ENCODE measurements at regions of chr12 and their contacts with region 1.

Region 1: DNA sequence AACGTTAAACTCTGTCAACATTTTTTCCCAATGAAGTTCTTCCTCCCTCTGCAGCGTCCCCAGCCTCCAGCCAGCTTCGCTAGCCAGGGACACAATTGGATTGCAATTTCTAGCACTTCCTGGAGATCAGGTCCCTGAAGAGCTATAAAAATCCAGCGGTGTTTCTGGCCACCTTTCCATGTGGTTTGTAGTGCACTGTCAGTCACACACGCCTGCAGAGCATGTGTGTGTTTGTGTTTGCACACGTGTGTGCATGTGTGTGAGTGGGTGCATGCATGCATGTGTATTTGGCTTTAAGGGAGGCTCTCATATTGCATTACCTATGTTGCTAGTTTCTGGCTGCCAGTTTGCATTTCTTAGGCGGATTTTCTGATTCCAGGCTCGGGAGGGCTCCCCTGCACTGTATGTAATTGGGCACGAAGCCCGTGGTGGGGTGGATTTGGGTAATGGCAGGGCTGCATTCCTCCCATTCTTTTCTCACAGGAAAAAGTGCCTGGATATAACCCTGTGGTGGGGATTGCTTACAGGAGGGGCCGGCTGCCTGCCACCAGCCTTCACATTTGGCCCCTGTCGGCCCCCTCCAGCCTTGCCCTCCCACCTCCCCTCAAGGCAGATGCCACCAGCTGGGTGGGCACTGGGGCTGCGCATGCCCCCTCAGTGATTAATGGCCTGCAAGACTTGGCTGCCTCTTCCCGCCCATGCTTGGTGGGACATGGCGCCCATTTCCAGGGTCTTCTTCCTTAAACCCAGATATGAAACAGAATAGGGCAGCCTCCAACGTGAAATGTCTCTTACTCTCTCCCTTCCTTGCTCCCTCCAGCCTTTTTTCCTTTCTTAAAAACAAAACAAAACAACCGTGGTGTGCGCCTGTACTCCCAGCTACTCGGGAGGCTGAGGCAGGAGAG is 74.0 kb downstream of the TSPAN9 start:
- DNase-seq: peak; percentile 37
- H3K4me3 ChIP-seq: no peak overlapping the region
- H3K27ac ChIP-seq: no peak overlapping the region
- H3K4me1 ChIP-seq: peaks cover 42% of the 10 kb centered on the region
- H3K27me3 ChIP-seq: no peaks in the 10 kb centered on the region
- CTCF ChIP-seq: no peak
- POLR2A ChIP-seq: no peak

Region 2: DNA sequence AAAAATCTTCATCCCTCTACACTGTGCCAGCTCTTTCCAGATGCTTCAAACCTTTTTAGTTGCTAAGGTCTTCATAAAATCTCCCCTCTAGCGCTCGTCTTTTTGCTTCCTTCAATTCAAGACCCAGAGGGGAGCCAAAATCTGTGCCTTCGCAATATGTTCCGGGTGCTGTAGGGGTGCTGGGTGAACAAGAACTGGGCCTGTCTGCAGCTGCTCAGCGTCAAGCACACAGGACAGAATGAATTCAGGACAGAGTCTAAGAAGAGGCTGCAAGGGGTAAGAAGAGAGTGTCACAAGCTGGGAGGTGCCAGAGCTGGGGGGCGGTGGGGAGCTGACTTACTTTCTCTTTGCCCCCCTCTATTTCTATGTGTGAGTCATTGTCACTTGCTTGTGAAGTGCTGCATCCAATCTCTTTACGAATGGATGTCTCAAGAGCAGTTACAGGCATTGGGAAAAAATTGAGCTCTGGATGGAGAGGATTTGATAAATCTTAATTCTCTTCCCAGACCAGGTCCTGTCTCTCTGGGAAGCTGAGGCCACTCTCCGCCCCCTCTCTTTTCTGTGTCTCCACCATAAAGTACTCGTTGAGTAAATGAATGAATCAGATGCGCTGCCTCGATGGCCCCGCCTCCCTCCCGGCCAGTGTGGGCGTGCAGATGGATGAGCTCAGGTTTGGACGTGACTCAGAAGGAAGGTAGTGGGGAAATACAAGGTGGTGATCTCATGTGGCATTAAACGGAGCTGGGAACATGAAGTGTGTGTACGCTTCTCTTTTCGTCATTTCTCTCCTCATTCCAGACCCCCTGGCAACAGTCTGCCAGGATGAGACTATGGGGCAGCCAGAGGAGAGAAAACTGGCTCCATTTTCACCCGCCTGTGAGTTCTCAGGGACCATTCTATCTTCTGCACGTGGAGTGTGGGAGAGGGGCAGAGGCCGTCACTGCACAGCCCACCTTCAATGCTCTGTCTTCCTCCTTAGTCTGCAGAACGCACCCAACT is 17.3 kb after region 1 on chr12:
- CTCF ChIA-PET with region 1: interaction called, 13 read pairs
- POLR2A ChIA-PET with region 1: no interaction called
- dilution Hi-C with region 1: no loop called
- intact Hi-C with region 1: loop called (anchors 1 kb)
- DNase-seq: no peak
- H3K4me3 ChIP-seq: no peak overlapping the region
- H3K27ac ChIP-seq: no peak overlapping the region
- H3K4me1 ChIP-seq: peaks cover 10% of the 10 kb centered on the region
- H3K27me3 ChIP-seq: no peaks in the 10 kb centered on the region
- CTCF ChIP-seq: no peak
- POLR2A ChIP-seq: no peak

Region 3: GRCh38 chr12:3202734-3203446 is 51.7 kb after region 1 on chr12:
- CTCF ChIA-PET with region 1: interaction called, 7 read pairs
- POLR2A ChIA-PET with region 1: no interaction called
- dilution Hi-C with region 1: no loop called
- intact Hi-C with region 1: loop called (anchors 5 kb)
- DNase-seq: peak; percentile 58
- H3K4me3 ChIP-seq: no peak overlapping the region
- H3K27ac ChIP-seq: no peak overlapping the region
- H3K4me1 ChIP-seq: peaks cover 22% of the 10 kb centered on the region
- H3K27me3 ChIP-seq: peaks cover 2 to 11% of the 10 kb centered on the region in 2 experiments
- CTCF ChIP-seq: peak; percentile 93 to 98
- POLR2A ChIP-seq: no peak

Region 4: DNA sequence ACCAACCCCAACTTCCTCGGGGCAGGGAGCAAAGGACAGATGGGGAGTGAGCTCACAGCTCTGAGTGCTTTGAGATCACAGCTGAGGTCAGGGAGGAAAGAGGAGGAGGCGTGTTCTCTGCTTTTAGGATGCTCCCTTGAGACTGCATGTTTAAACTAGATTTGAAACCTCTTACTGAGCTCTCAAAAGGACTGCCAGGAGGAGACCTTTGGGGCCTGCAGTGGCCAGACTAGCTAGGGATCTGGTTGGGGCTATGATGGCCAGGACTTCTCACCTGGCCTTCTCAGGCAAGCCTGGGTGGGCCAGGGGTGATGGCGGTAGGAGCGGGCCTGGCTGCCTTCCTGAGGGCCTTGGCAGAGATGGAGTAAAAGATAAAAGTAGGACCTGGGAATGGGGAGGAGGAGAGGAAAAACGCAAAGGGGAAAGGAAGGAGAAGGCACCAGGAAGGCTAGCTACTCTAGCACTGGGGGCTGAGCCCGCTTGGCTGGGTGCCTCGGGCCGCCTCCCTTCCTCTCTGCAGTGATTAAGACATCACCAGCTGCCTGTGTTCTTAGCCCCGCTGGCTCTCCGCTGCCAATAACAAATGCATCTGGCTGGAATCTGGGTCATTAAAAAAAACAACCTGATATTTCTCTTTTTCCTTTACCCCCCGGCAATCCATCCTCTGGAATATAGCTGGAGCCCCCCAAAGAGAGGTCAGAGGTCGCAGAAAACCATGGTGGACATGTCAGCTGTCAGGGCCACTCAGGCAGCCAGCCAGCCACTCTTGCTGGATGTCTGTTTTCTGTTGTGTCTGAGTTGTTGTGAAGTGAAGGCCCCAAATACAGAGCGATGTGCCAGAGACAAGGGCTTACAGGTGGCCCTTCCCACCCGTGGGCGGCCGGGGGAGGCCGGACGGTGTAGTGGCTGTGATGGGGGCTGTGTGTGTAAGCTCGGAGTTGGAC is 67.3 kb after region 1 on chr12:
- CTCF ChIA-PET with region 1: interaction called, 3 read pairs
- POLR2A ChIA-PET with region 1: no interaction called
- dilution Hi-C with region 1: no loop called
- intact Hi-C with region 1: loop called (anchors 5 kb)
- DNase-seq: peak; percentile 88
- H3K4me3 ChIP-seq: no peak overlapping the region
- H3K27ac ChIP-seq: peak overlapping the region; percentile 65
- H3K4me1 ChIP-seq: peaks cover 29% of the 10 kb centered on the region
- H3K27me3 ChIP-seq: no peaks in the 10 kb centered on the region
- CTCF ChIP-seq: peak in 1 of 2 donors; percentile 4
- POLR2A ChIP-seq: no peak

Region 5: DNA sequence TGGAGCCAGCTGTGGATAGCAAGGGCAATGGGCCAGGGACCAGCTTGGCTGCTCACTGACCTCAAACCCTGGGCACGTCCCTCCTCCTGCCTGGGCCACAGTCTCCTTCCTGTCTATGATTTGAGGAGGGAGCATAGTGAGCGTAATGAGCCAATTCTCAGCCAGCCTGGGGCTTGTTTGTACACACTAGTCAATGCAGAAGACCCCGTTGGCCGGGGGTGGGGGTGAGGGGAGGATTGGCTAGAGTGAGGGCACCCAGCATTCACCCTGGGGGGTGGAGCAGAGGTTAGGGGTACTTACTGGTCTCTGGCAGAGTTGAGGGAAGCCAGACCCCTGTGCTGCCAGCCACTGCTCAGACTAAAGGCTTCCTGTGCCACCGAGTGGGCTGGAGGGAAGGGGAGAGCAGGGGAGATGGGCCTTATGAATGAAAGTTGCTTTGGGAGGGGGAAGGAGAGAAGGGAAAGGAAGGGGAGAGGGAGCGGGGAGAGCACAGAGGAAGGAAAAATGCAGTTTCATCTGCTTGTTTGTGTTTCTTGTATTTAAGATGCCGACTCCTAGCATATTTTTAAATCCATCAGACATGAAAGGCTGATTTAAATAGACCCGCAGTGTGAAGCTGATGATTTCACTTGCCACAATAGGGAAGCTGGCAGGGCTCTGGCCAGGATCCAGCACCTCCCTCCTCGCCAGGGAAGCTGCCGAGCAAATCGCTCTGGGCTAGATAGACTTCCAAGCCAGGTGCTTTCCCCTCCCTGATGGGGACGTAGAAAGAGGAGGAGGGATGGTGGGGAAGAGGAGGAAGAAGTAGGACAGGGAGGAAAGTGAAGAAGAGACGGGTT is 453.8 kb after region 1 on chr12:
- CTCF ChIA-PET with region 1: no interaction called
- POLR2A ChIA-PET with region 1: no interaction called
- dilution Hi-C with region 1: no loop called
- intact Hi-C with region 1: no loop called
- DNase-seq: peak; percentile 41
- H3K4me3 ChIP-seq: no peak overlapping the region
- H3K27ac ChIP-seq: no peak overlapping the region
- H3K4me1 ChIP-seq: no peaks in the 10 kb centered on the region
- H3K27me3 ChIP-seq: peaks cover 0 to 3% of the 10 kb centered on the region in 2 experiments
- CTCF ChIP-seq: no peak
- POLR2A ChIP-seq: no peak